ENCODE measurements at regions of chr5 and their contacts with region 1.

Region 1: GRCh38 chr5:147223948-147224791 is 10.7 kb upstream of the STK32A start:
- DNase-seq: peak in 1 of 2 donors; percentile 52
- H3K4me3 ChIP-seq: no peak overlapping the region
- H3K27ac ChIP-seq: no peak overlapping the region
- H3K4me1 ChIP-seq: no peaks in the 10 kb centered on the region
- H3K27me3 ChIP-seq: no peaks in the 10 kb centered on the region
- CTCF ChIP-seq: peak; percentile 76 to 81

Region 2: GRCh38 chr5:147369742-147370374 is 145.7 kb after region 1 on chr5:
- intact Hi-C with region 1: loop called (anchors 5 kb)
- DNase-seq: no peak
- H3K4me3 ChIP-seq: peak overlapping the region in 1 of 2 donors; percentile 8
- H3K27ac ChIP-seq: peak overlapping the region in 1 of 2 donors; percentile 55
- H3K4me1 ChIP-seq: peaks cover 0 to 10% (median 2%) of the 10 kb centered on the region in 4 donors
- H3K27me3 ChIP-seq: no peaks in the 10 kb centered on the region
- CTCF ChIP-seq: peak; percentile 72 to 82

Region 3: DNA sequence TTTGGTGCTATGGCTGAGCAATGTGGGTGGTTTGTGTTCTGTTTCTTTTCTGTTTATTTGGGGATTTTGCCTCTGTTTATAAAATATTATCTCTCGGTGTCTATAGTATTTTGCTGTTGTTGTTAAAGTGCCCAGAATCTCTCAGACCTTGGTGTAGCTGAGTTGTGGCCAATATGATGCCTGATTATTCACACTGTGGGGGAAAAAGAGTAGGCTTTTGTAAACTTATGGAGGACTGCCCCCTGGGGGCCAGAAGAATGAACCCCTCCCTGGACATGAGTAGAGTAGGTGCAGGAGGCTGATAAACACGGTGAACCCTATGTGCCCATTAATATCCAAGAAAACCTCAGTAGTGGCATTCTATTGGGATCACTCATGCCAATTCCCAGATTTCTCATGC is 334.7 kb after region 1 on chr5:
- intact Hi-C with region 1: loop called (anchors 2 kb)
- DNase-seq: peak; percentile 72 to 76
- H3K4me3 ChIP-seq: no peak overlapping the region
- H3K27ac ChIP-seq: peak overlapping the region in 1 of 2 donors; percentile 27
- H3K4me1 ChIP-seq: peaks cover 0 to 25% (median 13%) of the 10 kb centered on the region in 4 donors
- H3K27me3 ChIP-seq: no peaks in the 10 kb centered on the region
- CTCF ChIP-seq: peak; percentile 67 to 78

Measured in tibial artery (tissue), 4 donors.